SK-N-SH (cell line): ENCODE measurements at regions of chr21 and their contacts with region 1.

Region 1: GRCh38 chr21:38733973-38734546 is 71.7 kb upstream of the ETS2 start:
- DNase-seq: peak; percentile 81
- H3K4me3 ChIP-seq: peak overlapping the region; percentile 30 to 51
- H3K27ac ChIP-seq: peak overlapping the region; percentile 5 to 78; a peak in 3 of 4 replicates
- H3K4me1 ChIP-seq: peaks cover 5 to 6% of the 10 kb centered on the region in 2 experiments; a peak in 3 of 4 replicates
- H3K27me3 ChIP-seq: no peaks in the 10 kb centered on the region
- CTCF ChIP-seq: peak; percentile 94
- EP300 ChIP-seq: peak in 1 of 2 experiments; percentile 18; a peak in 1 of 4 replicates
- RAD21 ChIP-seq: peak; percentile 99

Region 2: GRCh38 chr21:38751379-38752050 is 17.5 kb after region 1 on chr21:
- CTCF ChIA-PET with region 1: interaction called, 17 read pairs
- POLR2A ChIA-PET with region 1: no interaction called
- DNase-seq: no peak
- H3K4me3 ChIP-seq: no peak overlapping the region
- H3K27ac ChIP-seq: no peak overlapping the region
- H3K4me1 ChIP-seq: peaks cover 3 to 12% of the 10 kb centered on the region in 2 experiments; a peak in 2 of 4 replicates
- H3K27me3 ChIP-seq: no peaks in the 10 kb centered on the region
- CTCF ChIP-seq: no peak
- EP300 ChIP-seq: no peak
- RAD21 ChIP-seq: no peak

Region 3: DNA sequence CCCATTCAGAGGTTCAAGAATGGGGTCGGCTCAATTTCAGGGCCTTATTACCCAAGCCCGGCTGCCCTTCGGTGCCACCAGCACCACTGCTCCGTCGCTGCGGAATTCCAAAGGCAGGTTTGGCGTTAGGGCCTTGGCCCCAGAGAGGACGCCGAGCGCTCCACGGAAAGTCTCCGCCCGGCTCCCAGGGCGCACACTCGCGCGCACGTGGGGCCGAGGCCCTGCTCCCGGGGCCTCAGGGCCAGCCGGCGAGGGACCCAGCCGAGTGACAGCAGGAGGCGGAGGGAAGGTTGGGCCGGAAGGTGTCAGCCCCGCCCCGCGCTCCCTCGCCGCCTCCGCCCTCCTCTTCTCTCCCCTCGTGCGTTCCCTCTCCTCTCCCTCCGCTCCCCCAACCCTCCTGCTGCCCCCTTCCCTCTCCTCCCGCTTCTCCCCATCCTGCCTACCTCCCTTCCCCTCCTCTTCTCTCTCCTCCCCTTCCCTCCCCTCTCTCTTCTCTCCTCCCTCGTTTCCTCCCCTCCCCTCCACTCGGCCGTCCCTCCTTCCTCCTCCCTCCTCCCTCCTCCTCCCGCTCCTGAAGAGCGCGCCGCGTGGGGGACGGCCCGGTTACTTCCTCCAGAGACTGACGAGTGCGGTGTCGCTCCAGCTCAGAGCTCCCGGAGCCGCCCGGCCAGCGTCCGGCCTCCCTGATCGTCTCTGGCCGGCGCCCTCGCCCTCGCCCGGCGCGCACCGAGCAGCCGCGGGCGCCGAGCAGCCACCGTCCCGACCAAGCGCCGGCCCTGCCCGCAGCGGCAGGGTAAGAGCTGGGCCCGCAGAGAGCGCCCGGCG is 71.5 kb after region 1 on chr21 and contains the start of gene ETS2:
- CTCF ChIA-PET with region 1: interaction called, 11 read pairs
- POLR2A ChIA-PET with region 1: no interaction called
- DNase-seq: peak; percentile 91
- H3K4me3 ChIP-seq: peak within 1 kb of the TSS; percentile 68 to 86
- H3K27ac ChIP-seq: peak within 1 kb of the TSS; percentile 62 to 95
- H3K4me1 ChIP-seq: peaks cover 17 to 43% of the 10 kb centered on the region in 2 experiments
- H3K27me3 ChIP-seq: no peaks in the 10 kb centered on the region
- CTCF ChIP-seq: no peak
- EP300 ChIP-seq: no peak
- RAD21 ChIP-seq: no peak; the same call in 1 of the 2 replicates
- polyA plus RNA-seq, gene ETS2: 14.2 and 16.3 TPM in 2 replicates

Region 4: GRCh38 chr21:39125752-39126485 is 391.9 kb after region 1 on chr21:
- CTCF ChIA-PET with region 1: interaction called, 25 read pairs
- POLR2A ChIA-PET with region 1: no interaction called
- DNase-seq: peak; percentile 70
- H3K4me3 ChIP-seq: no peak overlapping the region
- H3K27ac ChIP-seq: no peak overlapping the region
- H3K4me1 ChIP-seq: peaks cover 0 to 8% of the 10 kb centered on the region in 2 experiments; a peak in 1 of 4 replicates
- H3K27me3 ChIP-seq: no peaks in the 10 kb centered on the region
- CTCF ChIP-seq: peak; percentile 72
- EP300 ChIP-seq: no peak
- RAD21 ChIP-seq: peak; percentile 93